Activated CD8-positive, alpha-beta T cell treated with anti-CD3 and anti-CD28 coated beads, Interleukin-2, amount 10 ng/mL, durations not matched to agents 7 days and 5 days (primary cell): ENCODE measurements at regions of chr2 and their contacts with region 1.

Region 1: DNA sequence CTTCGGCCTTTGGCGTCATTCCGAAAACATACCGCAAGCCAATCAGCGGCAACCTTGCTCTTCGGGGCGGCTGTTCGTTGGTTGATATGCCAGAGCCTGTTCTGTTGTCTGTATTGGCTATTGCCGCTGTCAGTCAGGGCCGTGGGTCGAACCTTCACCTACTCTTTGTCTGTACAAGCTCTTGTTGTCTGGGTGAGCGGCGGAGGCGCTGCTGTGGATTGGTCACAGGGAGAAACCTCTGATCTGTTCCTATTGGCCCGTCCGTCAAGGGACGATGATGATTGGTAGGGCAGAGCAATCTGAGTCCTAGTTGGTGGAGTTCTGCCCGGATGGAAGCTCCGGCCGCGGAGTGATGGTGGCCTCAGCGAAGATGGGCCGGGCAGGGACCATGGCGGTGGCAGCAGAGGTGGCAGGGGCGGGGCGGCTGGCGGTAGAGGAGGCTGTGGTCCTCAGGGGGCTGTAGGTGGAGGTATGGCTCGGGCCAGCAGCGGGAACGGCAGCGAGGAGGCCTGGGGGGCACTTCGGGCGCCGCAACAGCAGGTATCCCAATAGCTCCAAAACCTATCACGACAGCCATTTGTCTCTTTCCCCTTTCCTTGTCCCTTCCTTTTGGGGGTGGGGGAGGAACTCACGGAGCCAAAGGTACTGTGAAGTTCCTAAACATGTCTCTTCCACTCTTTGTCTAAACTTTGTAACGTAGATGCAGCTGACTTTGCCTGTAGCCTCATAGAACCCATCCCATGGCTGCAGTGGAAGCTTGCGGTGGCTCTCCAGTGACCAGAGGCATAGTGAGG is at the start of gene WBP1:
- DNase-seq: peak; percentile 100
- ATAC-seq: peak; percentile 91
- H3K4me3 Mint-ChIP-seq: peak within 1 kb of the TSS; percentile 99
- H3K27ac Mint-ChIP-seq: peak within 1 kb of the TSS; percentile 98
- H3K4me1 Mint-ChIP-seq: peaks cover 59% of the 10 kb centered on the region
- H3K27me3 Mint-ChIP-seq: no peaks in the 10 kb centered on the region
- total RNA-seq, gene WBP1: 34.0 to 34.3 TPM

Region 2: DNA sequence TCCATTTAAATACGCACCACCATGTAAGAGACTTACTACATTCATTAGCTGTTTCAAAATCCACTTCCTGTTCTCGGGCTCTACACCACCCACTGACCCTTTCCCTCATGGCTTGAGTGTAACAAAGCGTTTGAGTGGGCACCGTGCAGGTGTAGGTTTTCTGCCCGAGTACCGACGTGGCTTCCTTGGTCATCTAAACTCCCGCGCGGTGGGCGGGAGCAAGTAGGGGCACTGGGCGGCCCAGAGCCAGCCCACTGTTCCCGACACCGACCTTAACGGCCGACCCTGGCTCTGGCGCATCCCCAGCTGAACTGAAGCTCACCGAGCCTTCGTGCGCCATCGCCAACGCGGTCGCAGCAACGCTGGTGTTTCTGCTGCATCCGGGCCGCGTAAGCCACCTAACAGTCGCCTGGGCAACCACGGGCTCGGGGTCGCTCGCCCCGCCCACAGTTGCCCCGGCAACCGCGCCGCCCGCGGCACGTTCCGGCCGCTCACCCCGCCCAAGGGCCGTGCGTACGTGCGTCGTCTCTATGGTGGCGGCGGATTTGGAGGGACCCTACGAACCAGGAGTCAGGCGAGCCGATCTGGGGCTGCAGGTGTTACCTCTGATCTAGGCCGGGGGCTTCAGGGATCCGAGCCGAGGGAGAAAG is 37.0 kb before region 1 on chr2 and contains the starts of genes C2orf81 and WDR54:
- CTCF ChIA-PET with region 1: interaction called, 8 read pairs
- POLR2A ChIA-PET with region 1: interaction called, 14 read pairs
- DNase-seq: peak; percentile 96
- ATAC-seq: peak; percentile 85
- H3K4me3 Mint-ChIP-seq: peak within 1 kb of the TSS; percentile 100
- H3K27ac Mint-ChIP-seq: peak within 1 kb of the TSS; percentile 100
- H3K4me1 Mint-ChIP-seq: peaks cover 33% of the 10 kb centered on the region
- H3K27me3 Mint-ChIP-seq: no peaks in the 10 kb centered on the region
- total RNA-seq, gene C2orf81: 1.5 TPM
- total RNA-seq, gene WDR54: 93.7 to 96.9 TPM

Region 3: DNA sequence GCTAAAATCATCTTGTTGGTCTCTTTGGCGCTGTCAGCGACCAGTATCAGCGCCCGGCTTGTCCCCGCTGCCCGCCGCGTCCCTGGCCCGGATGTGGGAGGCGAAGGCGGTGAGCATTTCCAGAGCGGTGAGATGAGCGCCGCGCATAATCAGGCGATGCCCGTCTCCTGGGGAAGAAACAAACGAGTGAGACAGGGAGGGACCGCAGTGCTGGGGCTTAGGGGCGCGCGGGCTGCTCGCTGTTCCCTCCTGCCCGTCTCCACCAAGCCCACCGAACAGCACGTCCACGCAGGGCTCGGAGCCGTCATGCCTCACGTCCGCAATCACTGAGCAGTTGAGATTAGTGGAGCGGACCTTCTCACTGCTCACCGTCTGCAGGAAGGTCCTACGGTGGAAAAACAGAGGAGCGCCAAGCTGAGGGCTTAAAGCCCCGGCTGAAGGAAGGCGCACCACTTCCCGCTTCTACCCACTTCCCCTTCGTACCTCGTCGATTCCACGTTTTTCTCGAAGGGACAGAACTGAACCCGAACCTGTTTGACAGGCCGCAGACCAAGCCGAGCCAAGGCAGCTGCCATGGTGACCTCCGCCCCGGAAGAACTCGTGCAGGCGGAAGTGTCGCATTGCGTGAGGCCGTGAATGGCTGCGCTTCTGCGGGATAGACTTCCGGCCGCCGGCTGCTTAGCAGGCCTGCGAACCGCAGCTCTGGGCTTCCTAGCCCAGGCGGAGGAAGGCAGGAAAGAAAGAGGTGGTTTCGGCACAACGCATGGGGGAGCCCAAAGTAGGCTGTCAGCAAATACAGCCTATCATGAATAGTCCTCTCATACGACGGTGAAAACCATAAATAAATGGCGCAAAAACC is 14.0 kb after region 1 on chr2 and contains the start of gene MRPL53:
- CTCF ChIA-PET with region 1: interaction called, 14 read pairs
- POLR2A ChIA-PET with region 1: interaction called, 28 read pairs
- DNase-seq: peak; percentile 97
- ATAC-seq: peak; percentile 95
- H3K4me3 Mint-ChIP-seq: peak within 1 kb of the TSS; percentile 98
- H3K27ac Mint-ChIP-seq: peak within 1 kb of the TSS; percentile 99
- H3K4me1 Mint-ChIP-seq: peaks cover 33% of the 10 kb centered on the region
- H3K27me3 Mint-ChIP-seq: no peaks in the 10 kb centered on the region
- total RNA-seq, gene MRPL53: 95.7 to 96.2 TPM